ENCODE measurements at regions of chr10 and their contacts with region 1.

Region 1: DNA sequence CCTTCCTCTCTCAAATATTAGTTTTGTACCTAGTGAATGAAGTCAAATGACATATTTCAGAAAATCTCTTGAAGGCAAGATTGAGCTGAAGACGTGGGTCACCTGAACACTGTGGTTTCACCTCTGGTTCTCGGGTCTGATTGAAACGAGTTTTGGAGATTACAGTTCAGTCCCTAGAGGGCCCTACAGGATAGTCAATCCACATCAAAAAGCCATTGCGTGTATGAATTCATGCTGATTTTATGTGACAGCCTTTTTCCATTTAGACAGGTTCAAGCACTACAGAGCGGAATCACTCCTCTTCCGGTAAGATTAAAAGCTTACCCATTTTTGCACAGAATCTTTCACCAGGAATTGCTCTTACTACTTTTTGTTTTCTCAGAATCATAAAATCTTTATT is 62.2 kb downstream of the VIM start:
- DNase-seq: peak; percentile 21 to 67 (median 42)
- ATAC-seq: peak; percentile 93
- H3K4me3 ChIP-seq: no peak overlapping the region
- H3K27ac ChIP-seq: no peak overlapping the region
- H3K4me1 ChIP-seq: peaks cover 0 to 3% of the 10 kb centered on the region in 2 experiments; a peak in 1 of 5 replicates
- H3K27me3 ChIP-seq: no peaks in the 10 kb centered on the region
- CTCF ChIP-seq: peak; percentile 63 to 84 (median 63)
- EP300 ChIP-seq: no peak
- POLR2A ChIP-seq: no peak
- RAD21 ChIP-seq: peak; percentile 77 to 95

Region 2: DNA sequence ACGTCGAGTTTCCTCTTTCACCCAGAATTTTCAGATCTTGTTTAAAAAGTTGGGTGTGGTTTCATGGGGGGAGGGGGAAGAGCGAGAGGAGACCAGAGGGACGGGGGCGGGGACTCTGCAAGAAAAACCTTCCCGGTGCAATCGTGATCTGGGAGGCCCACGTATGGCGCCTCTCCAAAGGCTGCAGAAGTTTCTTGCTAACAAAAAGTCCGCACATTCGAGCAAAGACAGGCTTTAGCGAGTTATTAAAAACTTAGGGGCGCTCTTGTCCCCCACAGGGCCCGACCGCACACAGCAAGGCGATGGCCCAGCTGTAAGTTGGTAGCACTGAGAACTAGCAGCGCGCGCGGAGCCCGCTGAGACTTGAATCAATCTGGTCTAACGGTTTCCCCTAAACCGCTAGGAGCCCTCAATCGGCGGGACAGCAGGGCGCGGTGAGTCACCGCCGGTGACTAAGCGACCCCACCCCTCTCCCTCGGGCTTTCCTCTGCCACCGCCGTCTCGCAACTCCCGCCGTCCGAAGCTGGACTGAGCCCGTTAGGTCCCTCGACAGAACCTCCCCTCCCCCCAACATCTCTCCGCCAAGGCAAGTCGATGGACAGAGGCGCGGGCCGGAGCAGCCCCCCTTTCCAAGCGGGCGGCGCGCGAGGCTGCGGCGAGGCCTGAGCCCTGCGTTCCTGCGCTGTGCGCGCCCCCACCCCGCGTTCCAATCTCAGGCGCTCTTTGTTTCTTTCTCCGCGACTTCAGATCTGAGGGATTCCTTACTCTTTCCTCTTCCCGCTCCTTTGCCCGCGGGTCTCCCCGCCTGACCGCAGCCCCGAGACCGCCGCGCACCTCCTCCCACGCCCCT is 61.9 kb before region 1 on chr10 and contains the start of gene VIM:
- CTCF ChIA-PET with region 1: no interaction called
- POLR2A ChIA-PET with region 1: no interaction called
- in situ Hi-C with region 1: no loop called
- intact Hi-C with region 1: no loop called
- DNase-seq: peak; percentile 80 to 94 (median 84)
- ATAC-seq: peak; percentile 79
- H3K4me3 ChIP-seq: peak within 1 kb of the TSS; percentile 71
- H3K27ac ChIP-seq: peak within 1 kb of the TSS; percentile 82
- H3K4me1 ChIP-seq: peaks cover 21 to 36% of the 10 kb centered on the region in 2 experiments; a peak in 4 of 5 replicates
- H3K27me3 ChIP-seq: no peaks in the 10 kb centered on the region
- CTCF ChIP-seq: no peak
- EP300 ChIP-seq: peak; percentile 81
- POLR2A ChIP-seq: peak; percentile 66
- RAD21 ChIP-seq: peak in 1 of 2 experiments; percentile 14; a peak in 1 of 4 replicates
- polyA plus RNA-seq, gene VIM: 86.0 to 123 TPM

Region 3: DNA sequence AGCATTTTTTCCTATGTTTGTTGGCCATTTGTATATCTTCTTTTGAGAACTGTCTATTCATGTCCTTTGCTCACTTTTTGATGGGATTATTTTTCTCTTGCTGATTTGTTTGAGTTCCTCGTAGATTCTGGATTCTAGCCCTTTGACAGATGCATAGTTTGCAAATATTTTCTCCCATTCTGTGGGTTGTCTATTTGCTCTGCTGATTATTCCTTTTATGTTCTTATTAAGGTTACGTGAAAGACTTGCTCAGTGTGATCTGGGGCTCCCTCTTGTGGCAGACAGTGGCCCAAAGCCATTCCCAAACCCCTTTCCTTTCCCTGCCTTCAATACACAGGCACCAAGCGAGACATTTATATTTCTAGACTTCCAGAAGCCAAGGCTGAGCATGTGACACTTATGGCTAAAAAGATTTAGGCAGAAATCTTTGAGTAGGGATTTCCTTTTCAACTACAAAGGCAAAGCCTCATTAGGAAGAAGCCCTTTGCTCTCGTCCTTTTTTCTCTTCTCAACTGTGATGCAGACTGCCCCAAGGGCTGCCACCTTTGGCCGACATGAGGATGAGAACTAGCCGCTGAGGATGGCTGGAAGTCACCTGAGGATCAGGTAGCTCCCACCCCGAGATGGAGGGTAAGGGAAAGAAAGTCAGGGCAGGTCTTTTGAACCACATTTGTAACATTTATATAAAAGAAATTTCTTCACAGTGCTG is 140.6 kb after region 1 on chr10:
- CTCF ChIA-PET with region 1: interaction called, 3 read pairs
- POLR2A ChIA-PET with region 1: interaction called, 4 read pairs
- in situ Hi-C with region 1: no loop called
- intact Hi-C with region 1: loop called (anchors 1 kb)
- DNase-seq: peak; percentile 51 to 89 (median 58)
- ATAC-seq: peak; percentile 48
- H3K4me3 ChIP-seq: no peak overlapping the region
- H3K27ac ChIP-seq: peak overlapping the region; percentile 27
- H3K4me1 ChIP-seq: peaks cover 43 to 77% of the 10 kb centered on the region in 2 experiments
- H3K27me3 ChIP-seq: no peaks in the 10 kb centered on the region
- CTCF ChIP-seq: peak; percentile 79 to 92 (median 88)
- EP300 ChIP-seq: no peak
- POLR2A ChIP-seq: no peak
- RAD21 ChIP-seq: peak; percentile 87 to 91

Region 4: GRCh38 chr10:17599089-17599488 is 308.9 kb after region 1 on chr10:
- CTCF ChIA-PET with region 1: no interaction called
- POLR2A ChIA-PET with region 1: no interaction called
- in situ Hi-C with region 1: loop called (anchors 10 kb)
- intact Hi-C with region 1: loop called (anchors 1 kb)
- DNase-seq: peak; percentile 19 to 69 (median 39)
- ATAC-seq: peak; percentile 97
- H3K4me3 ChIP-seq: no peak overlapping the region
- H3K27ac ChIP-seq: no peak overlapping the region
- H3K4me1 ChIP-seq: peaks cover 2 to 6% of the 10 kb centered on the region in 2 experiments; a peak in 2 of 5 replicates
- H3K27me3 ChIP-seq: no peaks in the 10 kb centered on the region
- CTCF ChIP-seq: peak; percentile 49 to 63 (median 61)
- EP300 ChIP-seq: no peak
- POLR2A ChIP-seq: no peak
- RAD21 ChIP-seq: peak; percentile 77 to 88

Region 5: DNA sequence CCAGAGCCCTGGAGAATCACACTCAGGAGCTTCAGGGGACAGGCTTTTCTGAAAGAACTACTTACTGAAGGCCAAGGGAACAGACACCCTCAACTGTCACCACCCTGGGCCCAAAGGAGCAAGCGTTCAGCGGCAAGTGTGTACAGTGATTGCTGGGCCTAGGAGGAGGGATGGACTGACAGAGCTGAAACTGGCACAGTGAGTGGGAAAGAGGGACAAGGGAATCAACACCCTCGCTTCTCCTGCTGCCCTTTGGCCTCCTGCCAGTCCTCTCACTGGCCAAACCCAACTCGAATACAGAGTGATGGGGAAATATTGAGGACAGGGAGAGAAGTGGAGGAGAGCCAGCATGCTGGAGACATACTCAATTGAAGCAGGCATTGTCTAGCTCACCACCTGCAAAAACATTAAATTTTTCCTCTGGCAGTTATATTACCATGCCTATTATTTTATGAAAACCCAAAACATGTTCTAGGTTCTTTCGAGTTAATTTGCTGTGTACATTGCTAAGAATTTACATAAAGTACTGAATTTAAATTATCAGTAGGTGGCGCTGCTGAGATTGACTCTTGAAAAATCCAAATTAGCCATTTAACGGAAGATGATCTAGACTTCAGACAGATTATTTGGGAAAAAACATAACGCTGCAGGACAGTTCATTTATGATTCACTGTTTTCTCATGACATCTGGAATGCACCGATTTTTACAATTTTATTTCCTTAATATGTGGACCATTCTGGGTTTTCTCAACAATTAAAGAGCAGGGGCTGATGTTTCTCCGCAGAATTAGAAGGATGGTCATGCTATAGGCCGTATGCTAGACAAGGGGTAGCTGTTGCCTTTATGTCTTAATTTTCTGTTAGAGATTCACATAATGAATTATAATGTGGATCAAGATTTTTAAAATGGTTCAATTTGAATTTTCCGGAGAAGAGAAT is 447.1 kb after region 1 on chr10:
- CTCF ChIA-PET with region 1: no interaction called
- POLR2A ChIA-PET with region 1: no interaction called
- in situ Hi-C with region 1: loop called (anchors 10 kb)
- intact Hi-C with region 1: loop called (anchors 5 kb)
- DNase-seq: peak in 1 of 4 experiments; percentile 54
- ATAC-seq: peak; percentile 48; the same call in 1 of the 3 replicates
- H3K4me3 ChIP-seq: no peak overlapping the region
- H3K27ac ChIP-seq: no peak overlapping the region
- H3K4me1 ChIP-seq: peaks cover 3 to 4% of the 10 kb centered on the region in 2 experiments; a peak in 3 of 5 replicates
- H3K27me3 ChIP-seq: no peaks in the 10 kb centered on the region
- CTCF ChIP-seq: peak; percentile 39 to 75 (median 69); a peak in 5 of 6 replicates
- EP300 ChIP-seq: no peak
- POLR2A ChIP-seq: no peak
- RAD21 ChIP-seq: peak; percentile 26 to 61; a peak in 2 of 4 replicates

Region 6: GRCh38 chr10:18238870-18239485 is 948.8 kb after region 1 on chr10:
- CTCF ChIA-PET with region 1: no interaction called
- POLR2A ChIA-PET with region 1: no interaction called
- in situ Hi-C with region 1: loop called (anchors 25 kb)
- intact Hi-C with region 1: loop called (anchors 10 kb)
- DNase-seq: peak; percentile 16 to 46 (median 34)
- ATAC-seq: 0 out of 3 replicates have a peak, but pooled peaks have one; percentile 53
- H3K4me3 ChIP-seq: no peak overlapping the region
- H3K27ac ChIP-seq: no peak overlapping the region
- H3K4me1 ChIP-seq: no peaks in the 10 kb centered on the region
- H3K27me3 ChIP-seq: peaks cover 0 to 2% of the 10 kb centered on the region in 2 experiments; a peak in 1 of 5 replicates
- CTCF ChIP-seq: peak; percentile 55 to 79 (median 64); a peak in 5 of 6 replicates
- EP300 ChIP-seq: no peak
- POLR2A ChIP-seq: no peak
- RAD21 ChIP-seq: peak; percentile 55 to 62

Measured in K562 (cell line).